GM12878 (cell line): ENCODE measurements at regions of chr7 and their contacts with region 1.

Region 1: GRCh38 chr7:122637784-122638183 is 61.1 kb downstream of the RNF133 start:
- DNase-seq: no peak
- ATAC-seq: peak; percentile 59
- H3K4me3 ChIP-seq: no peak overlapping the region
- H3K27ac ChIP-seq: no peak overlapping the region
- H3K4me1 ChIP-seq: no peaks in the 10 kb centered on the region
- H3K27me3 ChIP-seq: no peaks in the 10 kb centered on the region
- CTCF ChIP-seq: no peak
- EP300 ChIP-seq: no peak
- POLR2A ChIP-seq: no peak
- RAD21 ChIP-seq: no peak

Region 2: GRCh38 chr7:122550545-122550944 is 87.2 kb before region 1 on chr7:
- CTCF ChIA-PET with region 1: interaction called, 8 read pairs
- POLR2A ChIA-PET with region 1: interaction called, 4 read pairs
- RAD21 ChIA-PET with region 1: interaction called, 10 read pairs
- SMC1A ChIA-PET with region 1: interaction called, 8 read pairs
- in situ Hi-C with region 1: no loop called
- intact Hi-C with region 1: no loop called
- DNase-seq: no peak
- ATAC-seq: peak; percentile 68
- H3K4me3 ChIP-seq: no peak overlapping the region
- H3K27ac ChIP-seq: no peak overlapping the region
- H3K4me1 ChIP-seq: no peaks in the 10 kb centered on the region
- H3K27me3 ChIP-seq: no peaks in the 10 kb centered on the region; a peak in 1 of 4 replicates
- CTCF ChIP-seq: peak in 2 of 3 experiments; percentile 23 to 60; a peak in 2 of 6 replicates
- EP300 ChIP-seq: no peak
- POLR2A ChIP-seq: no peak
- RAD21 ChIP-seq: no peak

Region 3: DNA sequence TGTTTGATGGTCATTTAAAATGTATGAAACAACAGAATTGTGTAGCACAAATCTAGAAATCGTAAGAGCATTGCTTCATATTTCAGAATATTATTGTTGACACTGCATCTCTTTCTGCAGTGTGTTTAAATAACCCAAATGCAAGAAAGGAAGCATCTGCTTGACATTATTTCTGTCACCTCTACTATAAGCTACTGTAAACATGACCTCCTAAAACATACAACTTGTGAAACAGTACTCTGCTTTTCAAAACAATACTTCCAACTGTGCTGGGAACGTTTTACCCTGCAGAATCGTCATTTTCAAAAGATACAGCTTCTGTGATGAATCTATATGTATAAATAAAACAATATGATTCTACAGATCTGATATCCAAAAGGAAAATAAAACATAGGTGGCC is 20.8 kb before region 1 on chr7:
- CTCF ChIA-PET with region 1: interaction called, 16 read pairs
- POLR2A ChIA-PET with region 1: interaction called, 7 read pairs
- RAD21 ChIA-PET with region 1: interaction called, 22 read pairs
- SMC1A ChIA-PET with region 1: interaction called, 31 read pairs
- in situ Hi-C with region 1: no loop called
- intact Hi-C with region 1: no loop called
- DNase-seq: no peak
- ATAC-seq: no peak
- H3K4me3 ChIP-seq: no peak overlapping the region
- H3K27ac ChIP-seq: no peak overlapping the region
- H3K4me1 ChIP-seq: no peaks in the 10 kb centered on the region
- H3K27me3 ChIP-seq: no peaks in the 10 kb centered on the region
- CTCF ChIP-seq: no peak
- EP300 ChIP-seq: no peak
- POLR2A ChIP-seq: no peak
- RAD21 ChIP-seq: no peak

Region 4: DNA sequence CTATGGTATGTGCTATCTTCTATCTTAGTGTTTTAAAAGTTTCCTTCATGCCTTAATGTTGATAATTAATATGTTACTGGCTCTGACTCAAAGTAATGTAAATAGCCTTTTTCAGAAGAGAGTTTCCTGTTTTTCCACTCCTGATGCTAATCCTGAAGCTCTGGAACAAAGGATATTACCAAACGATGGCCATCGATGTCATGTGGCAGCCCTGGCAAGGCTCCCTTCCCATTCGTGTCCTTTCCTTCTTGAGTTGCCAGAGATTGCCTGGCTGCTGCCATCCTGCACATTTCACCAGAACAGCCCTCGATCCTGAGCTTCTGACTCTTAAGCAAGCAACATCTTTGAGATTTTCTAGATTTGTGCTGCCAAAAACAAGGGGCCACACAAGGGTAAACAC is 15.1 kb after region 1 on chr7:
- CTCF ChIA-PET with region 1: interaction called, 21 read pairs
- POLR2A ChIA-PET with region 1: interaction called, 10 read pairs
- RAD21 ChIA-PET with region 1: interaction called, 32 read pairs
- SMC1A ChIA-PET with region 1: interaction called, 28 read pairs
- in situ Hi-C with region 1: no loop called
- intact Hi-C with region 1: no loop called
- DNase-seq: no peak
- ATAC-seq: no peak
- H3K4me3 ChIP-seq: no peak overlapping the region
- H3K27ac ChIP-seq: no peak overlapping the region
- H3K4me1 ChIP-seq: no peaks in the 10 kb centered on the region
- H3K27me3 ChIP-seq: no peaks in the 10 kb centered on the region
- CTCF ChIP-seq: no peak
- EP300 ChIP-seq: no peak
- POLR2A ChIP-seq: no peak
- RAD21 ChIP-seq: no peak

Region 5: GRCh38 chr7:122709930-122710646 is 72.3 kb after region 1 on chr7:
- CTCF ChIA-PET with region 1: interaction called, 3 read pairs
- POLR2A ChIA-PET with region 1: no interaction called
- RAD21 ChIA-PET with region 1: interaction called, 20 read pairs
- SMC1A ChIA-PET with region 1: interaction called, 4 read pairs
- in situ Hi-C with region 1: no loop called
- intact Hi-C with region 1: loop called (anchors 5 kb)
- DNase-seq: peak; percentile 7
- ATAC-seq: peak; percentile 89
- H3K4me3 ChIP-seq: no peak overlapping the region
- H3K27ac ChIP-seq: no peak overlapping the region
- H3K4me1 ChIP-seq: no peaks in the 10 kb centered on the region
- H3K27me3 ChIP-seq: no peaks in the 10 kb centered on the region
- CTCF ChIP-seq: no peak
- EP300 ChIP-seq: no peak
- POLR2A ChIP-seq: no peak
- RAD21 ChIP-seq: no peak

Region 6: GRCh38 chr7:122803323-122803722 is 165.5 kb after region 1 on chr7:
- CTCF ChIA-PET with region 1: interaction called, 11 read pairs
- POLR2A ChIA-PET with region 1: no interaction called
- RAD21 ChIA-PET with region 1: interaction called, 6 read pairs
- SMC1A ChIA-PET with region 1: interaction called, 3 read pairs
- in situ Hi-C with region 1: no loop called
- intact Hi-C with region 1: no loop called
- DNase-seq: no peak
- ATAC-seq: peak; percentile 83
- H3K4me3 ChIP-seq: no peak overlapping the region
- H3K27ac ChIP-seq: no peak overlapping the region
- H3K4me1 ChIP-seq: no peaks in the 10 kb centered on the region
- H3K27me3 ChIP-seq: no peaks in the 10 kb centered on the region
- CTCF ChIP-seq: peak in 2 of 3 experiments; percentile 34 to 52; a peak in 3 of 6 replicates
- EP300 ChIP-seq: no peak
- POLR2A ChIP-seq: no peak
- RAD21 ChIP-seq: peak; percentile 22; the same call in 1 of the 2 replicates